Heart right ventricle (tissue), 16 donors: ENCODE measurements at regions of chr11 and their contacts with region 1.

Region 1: DNA sequence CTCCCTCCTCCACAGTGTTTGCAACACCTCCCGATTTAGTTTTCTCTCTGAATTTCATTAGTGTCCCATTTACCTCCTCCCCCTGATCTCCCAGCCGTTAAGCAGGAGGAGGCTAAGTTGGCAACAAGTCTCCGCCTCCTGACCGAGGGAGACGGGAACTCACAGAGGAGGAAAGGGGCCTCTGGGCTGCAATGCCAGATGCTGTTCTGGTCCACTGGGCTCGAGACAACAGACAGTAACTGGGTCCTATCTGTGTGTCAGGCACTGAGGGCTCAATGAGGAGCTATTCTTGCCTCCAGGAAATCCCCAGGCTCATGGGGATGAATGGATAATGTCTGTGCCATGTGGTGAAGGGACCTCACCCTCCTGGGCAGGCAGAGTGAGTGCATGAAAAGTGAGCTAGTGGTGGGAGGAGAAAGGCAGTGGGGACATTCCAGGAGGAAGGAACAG is 228.1 kb downstream of the TENM4 start:
- DNase-seq: no peak
- ATAC-seq: no peak
- H3K4me3 ChIP-seq: no peak overlapping the region
- H3K27ac ChIP-seq: no peak overlapping the region
- H3K4me1 ChIP-seq: no peaks in the 10 kb centered on the region
- H3K27me3 ChIP-seq: no peaks in the 10 kb centered on the region
- CTCF ChIP-seq: no peak

Region 2: GRCh38 chr11:79100093-79100910 is 112.5 kb before region 1 on chr11:
- intact Hi-C with region 1: no loop called
- DNase-seq: no peak
- ATAC-seq: peak in 2 of 8 donors; percentile 40 to 69
- H3K4me3 ChIP-seq: no peak overlapping the region
- H3K27ac ChIP-seq: no peak overlapping the region
- H3K4me1 ChIP-seq: peaks cover 0 to 11% (median 0%) of the 10 kb centered on the region in 9 donors
- H3K27me3 ChIP-seq: peaks cover 0 to 7% (median 0%) of the 10 kb centered on the region in 7 donors
- CTCF ChIP-seq: peak; percentile 27 to 71 (median 66)

Region 3: DNA sequence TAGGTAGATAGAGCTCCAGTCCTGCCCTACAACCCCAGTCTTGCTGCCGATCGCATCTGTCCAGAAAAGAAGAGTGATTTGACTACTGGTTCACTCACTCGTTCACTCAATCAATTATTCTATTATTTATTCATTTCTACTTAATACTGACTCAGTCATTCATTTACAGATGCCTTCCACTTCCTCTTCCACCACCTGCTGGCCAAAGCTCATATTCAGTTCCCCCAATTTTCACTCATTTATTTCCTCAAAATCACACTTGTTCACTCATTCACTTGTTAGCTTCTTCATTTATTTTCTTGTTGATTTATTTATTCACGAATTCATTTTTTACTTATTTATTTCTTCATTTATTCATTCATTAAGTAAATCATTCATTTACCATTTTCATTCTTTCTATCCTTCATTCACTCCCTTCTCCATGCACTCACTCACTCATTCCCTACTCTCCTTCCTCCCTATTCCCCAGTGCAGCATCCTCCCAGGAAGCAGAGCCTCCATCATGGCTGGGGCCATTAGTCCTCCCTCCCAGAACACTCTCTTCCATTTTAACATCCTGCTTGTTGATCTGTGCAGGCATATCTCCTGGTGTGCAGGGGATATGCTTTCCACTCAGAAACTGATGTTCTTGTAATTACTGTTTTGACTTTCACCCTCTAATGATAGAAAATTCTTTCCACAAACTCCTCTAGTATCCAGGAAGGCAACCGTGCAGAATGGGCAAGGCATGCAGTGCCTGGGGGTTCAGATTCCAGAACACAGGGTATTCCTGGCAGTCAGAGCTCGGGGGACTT is 52.9 kb before region 1 on chr11:
- intact Hi-C with region 1: loop called in 1 of 10 experiments (anchors 10 kb)
- DNase-seq: no peak
- ATAC-seq: no peak
- H3K4me3 ChIP-seq: no peak overlapping the region
- H3K27ac ChIP-seq: no peak overlapping the region
- H3K4me1 ChIP-seq: no peaks in the 10 kb centered on the region
- H3K27me3 ChIP-seq: no peaks in the 10 kb centered on the region
- CTCF ChIP-seq: peak in 1 of 9 donors; percentile 13

Region 4: GRCh38 chr11:79227757-79228755 is 15.3 kb after region 1 on chr11:
- intact Hi-C with region 1: no loop called
- DNase-seq: no peak
- ATAC-seq: no peak
- H3K4me3 ChIP-seq: no peak overlapping the region
- H3K27ac ChIP-seq: no peak overlapping the region
- H3K4me1 ChIP-seq: peaks cover 0 to 5% (median 0%) of the 10 kb centered on the region in 9 donors
- H3K27me3 ChIP-seq: no peaks in the 10 kb centered on the region
- CTCF ChIP-seq: no peak

Region 5: GRCh38 chr11:79371152-79371551 is 158.4 kb after region 1 on chr11:
- intact Hi-C with region 1: no loop called
- DNase-seq: no peak
- ATAC-seq: no peak
- H3K4me3 ChIP-seq: no peak overlapping the region
- H3K27ac ChIP-seq: no peak overlapping the region
- H3K4me1 ChIP-seq: no peaks in the 10 kb centered on the region
- H3K27me3 ChIP-seq: peaks cover 0 to 19% (median 12%) of the 10 kb centered on the region in 7 donors
- CTCF ChIP-seq: no peak

Region 6: DNA sequence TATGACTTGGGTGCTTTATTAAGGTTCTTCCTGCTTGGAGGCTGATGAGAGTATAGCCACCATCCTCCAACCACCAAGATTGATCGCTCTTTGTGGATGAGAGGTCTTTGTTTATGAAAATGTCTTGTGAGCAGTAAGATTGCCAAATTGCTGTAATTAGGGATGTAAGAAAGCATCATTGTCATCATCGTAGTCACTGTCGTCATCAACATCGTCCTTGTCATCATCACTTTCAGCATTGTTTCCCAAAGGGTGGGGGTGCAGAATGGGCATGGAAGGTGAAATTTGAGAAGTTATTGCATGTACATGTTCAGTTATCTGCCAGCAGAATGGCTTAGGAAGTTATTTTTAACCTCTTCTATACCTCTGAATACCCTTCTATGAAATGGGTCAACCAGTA is 667.5 kb after region 1 on chr11:
- intact Hi-C with region 1: no loop called
- DNase-seq: no peak
- ATAC-seq: no peak
- H3K4me3 ChIP-seq: no peak overlapping the region
- H3K27ac ChIP-seq: no peak overlapping the region
- H3K4me1 ChIP-seq: no peaks in the 10 kb centered on the region
- H3K27me3 ChIP-seq: no peaks in the 10 kb centered on the region
- CTCF ChIP-seq: no peak